CD14-positive monocyte (primary cell): ENCODE measurements at regions of chr14 and their contacts with region 1.

Region 1: GRCh38 chr14:59897761-59898383 is 22.1 kb upstream of the LRRC9 start:
- DNase-seq: peak; percentile 40 to 54 (median 52)
- H3K4me3 ChIP-seq: no peak overlapping the region
- H3K4me3 Mint-ChIP-seq: no peak overlapping the region
- H3K27ac ChIP-seq: no peak overlapping the region
- H3K27ac Mint-ChIP-seq: no peak overlapping the region
- H3K4me1 ChIP-seq: no peaks in the 10 kb centered on the region
- H3K4me1 Mint-ChIP-seq: peaks cover 9% of the 10 kb centered on the region
- H3K27me3 ChIP-seq: no peaks in the 10 kb centered on the region
- H3K27me3 Mint-ChIP-seq: peaks cover 0 to 2% (median 0%) of the 10 kb centered on the region in 3 donors
- CTCF ChIP-seq: peak; percentile 70

Region 2: GRCh38 chr14:59632381-59632780 is 265.5 kb before region 1 on chr14:
- intact Hi-C with region 1: loop called (anchors 2 to 5 kb)
- DNase-seq: peak; percentile 2 to 37 (median 24)
- H3K4me3 ChIP-seq: no peak overlapping the region
- H3K4me3 Mint-ChIP-seq: no peak overlapping the region
- H3K27ac ChIP-seq: no peak overlapping the region
- H3K27ac Mint-ChIP-seq: no peak overlapping the region
- H3K4me1 ChIP-seq: peaks cover 5 to 7% of the 10 kb centered on the region in 2 donors
- H3K4me1 Mint-ChIP-seq: peaks cover 11% of the 10 kb centered on the region
- H3K27me3 ChIP-seq: peaks cover 30% of the 10 kb centered on the region in 2 donors
- H3K27me3 Mint-ChIP-seq: peaks cover 32 to 51% (median 39%) of the 10 kb centered on the region in 3 donors
- CTCF ChIP-seq: peak; percentile 68

Region 3: GRCh38 chr14:59755388-59755787 is 142.5 kb before region 1 on chr14:
- intact Hi-C with region 1: no loop called
- DNase-seq: no peak
- H3K4me3 ChIP-seq: no peak overlapping the region
- H3K4me3 Mint-ChIP-seq: no peak overlapping the region
- H3K27ac ChIP-seq: no peak overlapping the region
- H3K27ac Mint-ChIP-seq: no peak overlapping the region
- H3K4me1 ChIP-seq: no peaks in the 10 kb centered on the region
- H3K4me1 Mint-ChIP-seq: no peaks in the 10 kb centered on the region
- H3K27me3 ChIP-seq: no peaks in the 10 kb centered on the region
- H3K27me3 Mint-ChIP-seq: no peaks in the 10 kb centered on the region
- CTCF ChIP-seq: no peak